Activated CD8-positive, alpha-beta T cell treated with anti-CD3 and anti-CD28 coated beads for 36 hours (primary cell): ENCODE measurements at regions of chr9 and their contacts with region 1.

Region 1: DNA sequence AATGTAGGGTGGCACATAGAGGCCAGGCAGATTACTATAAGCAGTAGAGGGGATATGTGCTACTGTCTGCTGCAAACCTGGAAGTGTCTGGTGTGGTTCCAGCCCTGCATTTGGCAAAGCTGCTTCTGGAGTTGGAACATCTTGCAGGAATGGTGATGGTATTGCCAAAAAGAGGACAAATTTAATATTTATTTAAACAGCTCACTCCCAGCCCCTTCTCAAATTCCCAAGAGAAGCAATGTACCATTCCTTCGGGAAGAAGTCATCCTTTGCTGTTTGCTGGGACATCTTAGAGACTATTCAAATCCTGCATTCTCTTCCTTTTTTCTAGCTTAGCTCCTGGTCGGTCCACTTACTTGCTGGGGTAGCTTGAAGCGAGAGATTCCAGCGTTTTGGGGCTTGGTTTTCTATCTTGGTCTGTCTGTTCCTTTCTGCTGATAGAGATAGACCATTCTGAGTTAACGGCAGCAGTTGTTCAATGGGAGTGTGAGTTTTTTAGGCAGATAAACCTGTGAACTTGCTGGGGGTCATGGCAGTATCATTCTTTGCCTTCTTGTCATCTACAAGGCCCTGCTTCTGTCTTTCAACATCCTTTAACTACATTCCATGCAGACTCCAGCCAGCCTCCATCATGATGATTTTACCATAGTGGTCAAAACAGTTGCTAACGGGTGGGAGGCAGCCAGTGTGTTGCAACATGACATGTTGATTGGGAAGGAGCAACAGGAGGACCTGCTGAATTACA is 69.9 kb downstream of the RCL1 start:
- DNase-seq: no peak
- ATAC-seq: no peak
- H3K4me3 Mint-ChIP-seq: no peak overlapping the region
- H3K27ac Mint-ChIP-seq: no peak overlapping the region
- H3K4me1 Mint-ChIP-seq: peaks cover 19% of the 10 kb centered on the region
- H3K27me3 Mint-ChIP-seq: no peaks in the 10 kb centered on the region
- CTCF ChIP-seq: no peak

Region 2: GRCh38 chr9:4883326-4883873 is 20.7 kb after region 1 on chr9:
- CTCF ChIA-PET with region 1: interaction called, 10 read pairs
- POLR2A ChIA-PET with region 1: no interaction called
- intact Hi-C with region 1: no loop called
- DNase-seq: no peak
- ATAC-seq: no peak
- H3K4me3 Mint-ChIP-seq: no peak overlapping the region
- H3K27ac Mint-ChIP-seq: no peak overlapping the region
- H3K4me1 Mint-ChIP-seq: no peaks in the 10 kb centered on the region
- H3K27me3 Mint-ChIP-seq: no peaks in the 10 kb centered on the region
- CTCF ChIP-seq: no peak

Region 3: DNA sequence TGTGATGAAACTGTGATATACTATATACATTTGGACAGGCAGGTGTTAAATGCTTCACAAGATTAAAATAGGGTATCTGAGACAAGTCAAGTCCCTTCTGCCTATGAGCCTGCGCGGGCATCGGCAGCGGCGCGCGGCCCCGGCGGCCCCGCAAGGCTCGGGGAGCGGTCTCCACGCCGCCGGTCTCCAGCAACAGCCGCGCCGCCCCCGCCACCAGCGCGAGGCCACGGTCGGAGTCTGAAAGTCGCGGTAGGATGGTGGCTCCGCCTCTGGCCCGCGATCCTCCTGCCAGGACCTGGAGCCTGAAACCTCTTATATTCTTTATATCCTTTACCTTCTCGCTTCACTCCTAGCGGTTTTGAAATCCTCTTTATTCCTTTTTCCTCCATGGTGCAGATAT is 223.3 kb after region 1 on chr9:
- CTCF ChIA-PET with region 1: no interaction called
- POLR2A ChIA-PET with region 1: no interaction called
- intact Hi-C with region 1: no loop called
- DNase-seq: no peak
- ATAC-seq: no peak
- H3K4me3 Mint-ChIP-seq: no peak overlapping the region
- H3K27ac Mint-ChIP-seq: no peak overlapping the region
- H3K4me1 Mint-ChIP-seq: no peaks in the 10 kb centered on the region
- H3K27me3 Mint-ChIP-seq: no peaks in the 10 kb centered on the region
- CTCF ChIP-seq: no peak